ENCODE measurements at regions of chr3 and their contacts with region 1.

Region 1: DNA sequence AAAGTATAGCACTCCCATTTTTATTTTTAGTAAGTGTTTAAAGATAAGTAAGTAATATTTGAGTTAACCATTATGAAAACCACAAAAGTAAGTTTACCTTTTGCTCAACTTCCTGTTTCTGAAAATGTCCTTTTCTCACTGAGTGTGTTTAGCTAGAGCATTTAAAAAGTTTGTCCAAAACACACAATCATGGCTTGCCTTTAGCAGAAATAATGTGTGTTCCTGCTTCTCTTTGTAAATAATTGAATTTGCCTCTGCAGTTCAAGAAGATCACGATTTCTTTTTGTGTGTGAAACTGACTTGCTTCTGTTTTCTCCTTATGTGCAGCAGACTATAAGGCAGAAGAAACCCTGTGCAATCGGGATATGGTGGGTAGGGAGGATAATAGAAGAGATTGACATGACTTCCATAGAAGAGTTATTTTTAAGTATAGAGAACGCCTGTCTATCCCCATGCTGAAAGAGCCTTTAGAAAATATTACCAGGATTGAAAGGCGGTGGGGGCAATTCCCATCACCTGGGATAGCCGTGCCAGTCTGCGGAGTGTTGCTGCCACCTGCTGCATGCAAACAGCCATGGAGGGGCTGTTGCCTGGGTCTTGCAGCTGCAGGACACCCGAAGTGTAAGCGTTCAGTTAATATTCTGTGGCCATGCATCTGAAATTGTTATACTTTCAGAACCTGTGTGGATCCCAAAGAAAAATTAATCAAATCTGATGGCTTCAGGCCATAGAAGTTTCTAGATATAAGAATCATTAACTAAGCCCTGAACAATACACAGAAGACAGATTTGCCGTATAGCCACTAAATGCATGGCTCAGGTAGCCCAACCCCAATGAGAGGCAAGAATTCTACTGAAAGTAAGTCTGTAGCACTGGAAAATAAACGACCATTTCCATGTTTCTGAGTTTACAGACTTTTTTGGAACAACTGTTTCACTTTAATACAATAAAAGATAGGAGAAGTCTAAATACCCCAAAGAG is 2.4 kb upstream of the CD96 start:
- DNase-seq: peak; percentile 81
- ATAC-seq: peak; percentile 21
- H3K4me3 Mint-ChIP-seq: peak overlapping the region; percentile 62
- H3K27ac Mint-ChIP-seq: peak overlapping the region; percentile 80
- H3K4me1 Mint-ChIP-seq: peaks cover 72% of the 10 kb centered on the region
- H3K27me3 Mint-ChIP-seq: no peaks in the 10 kb centered on the region

Region 2: GRCh38 chr3:109731620-109732473 is 1807.8 kb before region 1 on chr3:
- CTCF ChIA-PET with region 1: no interaction called
- POLR2A ChIA-PET with region 1: no interaction called
- intact Hi-C with region 1: loop called (anchors 1 to 2 kb)
- DNase-seq: peak; percentile 72
- ATAC-seq: peak; percentile 73
- H3K4me3 Mint-ChIP-seq: no peak overlapping the region
- H3K27ac Mint-ChIP-seq: no peak overlapping the region
- H3K4me1 Mint-ChIP-seq: peaks cover 4% of the 10 kb centered on the region
- H3K27me3 Mint-ChIP-seq: no peaks in the 10 kb centered on the region

Region 3: DNA sequence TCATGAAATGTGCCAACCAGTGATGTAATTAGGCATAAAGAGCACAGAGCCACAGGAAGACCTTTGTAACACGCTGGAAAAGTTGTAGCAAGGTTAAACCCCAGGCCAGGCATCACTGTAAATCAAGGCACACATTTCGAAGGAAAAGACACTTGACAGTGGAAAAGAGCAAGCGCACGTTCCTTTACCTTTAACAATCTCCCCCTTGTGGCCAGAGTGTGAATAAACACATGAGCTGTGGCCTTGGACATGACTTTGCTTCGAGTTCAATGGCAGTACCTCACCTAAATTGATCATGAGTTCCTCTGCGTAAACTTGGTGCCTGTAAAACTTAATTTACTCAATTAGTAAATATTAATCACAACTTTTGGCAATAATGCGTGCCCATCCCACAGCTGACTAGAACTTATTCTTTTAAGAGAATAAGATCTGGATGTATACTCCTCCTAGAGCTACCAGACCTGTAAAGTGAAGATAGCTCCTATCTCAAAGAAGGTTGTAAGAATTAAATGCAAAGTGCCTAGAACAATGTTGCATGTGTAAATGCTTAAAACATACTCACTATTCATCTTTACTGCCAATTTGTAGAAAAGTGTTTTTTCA is 1225.0 kb before region 1 on chr3:
- CTCF ChIA-PET with region 1: no interaction called
- POLR2A ChIA-PET with region 1: no interaction called
- intact Hi-C with region 1: loop called in 1 of 2 experiments (anchors 10 kb)
- DNase-seq: peak; percentile 67
- ATAC-seq: peak; percentile 63
- H3K4me3 Mint-ChIP-seq: no peak overlapping the region
- H3K27ac Mint-ChIP-seq: no peak overlapping the region
- H3K4me1 Mint-ChIP-seq: peaks cover 2% of the 10 kb centered on the region
- H3K27me3 Mint-ChIP-seq: peaks cover 3% of the 10 kb centered on the region

Region 4: DNA sequence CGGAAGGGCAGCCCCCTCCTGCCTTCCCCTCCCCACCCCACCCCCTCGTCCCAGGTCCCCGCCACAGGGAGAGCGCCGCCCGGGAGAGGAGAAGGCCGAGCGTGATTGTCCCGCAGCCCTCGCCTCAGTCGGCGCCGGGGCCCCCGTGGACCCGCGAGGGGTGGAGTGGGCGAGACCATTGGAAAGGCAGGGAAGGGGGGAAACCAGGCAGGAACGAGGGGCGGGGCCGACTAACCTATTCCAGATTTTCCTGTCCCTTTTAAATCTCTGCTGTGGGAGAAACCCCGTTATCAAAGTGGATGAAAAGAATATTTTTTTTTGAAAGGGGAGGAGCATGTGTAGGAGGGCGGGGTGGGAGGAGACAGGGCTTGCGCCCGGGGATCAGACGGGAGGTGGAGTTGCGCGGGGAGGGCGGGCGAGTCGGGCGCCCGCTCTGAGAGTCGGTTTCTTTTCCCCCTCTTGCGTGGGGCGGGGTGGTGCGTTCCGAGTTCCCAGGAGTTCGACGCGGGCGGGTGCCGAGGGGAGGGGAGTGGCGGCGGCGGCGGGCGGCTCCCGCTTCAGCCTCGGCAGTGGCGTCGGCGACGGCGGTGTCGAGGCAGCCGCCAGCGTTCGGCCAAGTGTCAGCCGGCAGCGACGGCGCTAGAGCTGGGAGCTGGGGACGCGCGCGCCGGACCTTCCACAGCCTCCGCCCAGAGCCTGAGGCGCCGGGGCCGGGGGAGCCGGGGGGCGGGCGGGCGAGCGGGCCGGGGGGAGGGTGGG is 468.2 kb before region 1 on chr3 and contains the start of gene NECTIN3:
- CTCF ChIA-PET with region 1: interaction called, 3 read pairs
- POLR2A ChIA-PET with region 1: no interaction called
- intact Hi-C with region 1: loop called (anchors 1 to 5 kb)
- DNase-seq: peak; percentile 91
- ATAC-seq: peak; percentile 95
- H3K4me3 Mint-ChIP-seq: peak within 1 kb of the TSS; percentile 83
- H3K27ac Mint-ChIP-seq: peak within 1 kb of the TSS; percentile 80
- H3K4me1 Mint-ChIP-seq: peaks cover 28% of the 10 kb centered on the region
- H3K27me3 Mint-ChIP-seq: peaks cover 40% of the 10 kb centered on the region
- total RNA-seq, gene NECTIN3: 5.1 to 5.9 TPM

Region 5: GRCh38 chr3:111369953-111370352 is 169.7 kb before region 1 on chr3:
- CTCF ChIA-PET with region 1: no interaction called
- POLR2A ChIA-PET with region 1: no interaction called
- intact Hi-C with region 1: loop called in 1 of 2 experiments (anchors 5 kb)
- DNase-seq: no peak
- ATAC-seq: no peak
- H3K4me3 Mint-ChIP-seq: no peak overlapping the region
- H3K27ac Mint-ChIP-seq: no peak overlapping the region
- H3K4me1 Mint-ChIP-seq: peaks cover 10% of the 10 kb centered on the region
- H3K27me3 Mint-ChIP-seq: peaks cover 2% of the 10 kb centered on the region

Region 6: DNA sequence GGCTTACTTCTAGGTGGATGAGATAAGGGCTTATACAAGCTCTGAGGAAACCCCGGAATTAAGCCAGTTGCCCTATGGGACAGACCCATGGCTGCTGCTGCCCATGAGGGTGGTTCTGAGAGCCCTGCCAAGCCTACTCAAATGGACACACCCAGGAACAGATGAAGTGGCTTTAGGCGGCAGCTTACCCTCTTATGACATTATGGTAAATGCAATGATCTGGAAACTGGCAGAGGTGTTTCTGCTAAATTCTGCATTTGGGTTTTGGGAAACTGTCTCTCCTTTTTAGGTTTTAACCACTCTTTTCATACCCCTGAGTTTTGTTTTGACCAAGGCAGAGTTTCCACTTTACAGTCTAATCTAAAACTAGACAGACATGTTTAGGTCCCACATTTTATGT is 64.5 kb after region 1 on chr3:
- CTCF ChIA-PET with region 1: no interaction called
- POLR2A ChIA-PET with region 1: interaction called, 3 read pairs
- intact Hi-C with region 1: loop called (anchors 1 kb)
- DNase-seq: peak; percentile 67
- ATAC-seq: peak; percentile 64
- H3K4me3 Mint-ChIP-seq: peak overlapping the region; percentile 44
- H3K27ac Mint-ChIP-seq: peak overlapping the region; percentile 97
- H3K4me1 Mint-ChIP-seq: peaks cover 88% of the 10 kb centered on the region
- H3K27me3 Mint-ChIP-seq: no peaks in the 10 kb centered on the region

Region 7: GRCh38 chr3:111668912-111669488 is 129.4 kb after region 1 on chr3:
- CTCF ChIA-PET with region 1: interaction called, 3 read pairs
- POLR2A ChIA-PET with region 1: no interaction called
- intact Hi-C with region 1: loop called in 1 of 2 experiments (anchors 1 kb)
- DNase-seq: no peak
- ATAC-seq: peak; percentile 39
- H3K4me3 Mint-ChIP-seq: peak overlapping the region; percentile 26
- H3K27ac Mint-ChIP-seq: peak overlapping the region; percentile 75
- H3K4me1 Mint-ChIP-seq: peaks cover 79% of the 10 kb centered on the region
- H3K27me3 Mint-ChIP-seq: no peaks in the 10 kb centered on the region

Measured in activated CD4-positive, alpha-beta T cell treated with anti-CD3 and anti-CD28 coated beads for 36 hours (primary cell).